Activated CD8-positive, alpha-beta T cell treated with anti-CD3 and anti-CD28 coated beads for 36 hours (primary cell): ENCODE measurements at regions of chr14 and their contacts with region 1.

Region 1: GRCh38 chr14:50726372-50727107 is 58.4 kb upstream of the SAV1 start:
- DNase-seq: peak; percentile 43
- ATAC-seq: peak; percentile 95
- H3K4me3 Mint-ChIP-seq: peak overlapping the region; percentile 37
- H3K27ac Mint-ChIP-seq: peak overlapping the region; percentile 93
- H3K4me1 Mint-ChIP-seq: peaks cover 32% of the 10 kb centered on the region
- H3K27me3 Mint-ChIP-seq: no peaks in the 10 kb centered on the region
- CTCF ChIP-seq: no peak

Region 2: DNA sequence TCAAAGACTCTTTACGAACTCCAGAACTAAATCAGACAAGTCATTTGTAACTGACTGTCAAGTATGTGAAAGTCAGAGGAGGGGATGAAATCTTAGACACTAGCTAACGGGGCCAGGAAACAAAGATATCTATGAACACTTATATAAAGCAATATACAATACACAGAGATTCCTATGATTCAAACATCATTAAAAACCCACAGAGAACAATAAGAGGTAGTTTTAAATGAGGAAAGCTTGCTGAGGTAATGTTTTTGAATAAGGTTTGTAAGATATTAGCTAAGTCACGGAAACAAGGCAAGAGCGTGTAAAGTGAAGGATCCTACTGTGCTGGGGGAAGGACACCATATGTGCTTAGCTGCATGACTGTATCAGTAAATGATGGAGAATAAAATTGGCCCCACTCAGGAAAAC is 95.1 kb before region 1 on chr14:
- CTCF ChIA-PET with region 1: no interaction called
- POLR2A ChIA-PET with region 1: no interaction called
- intact Hi-C with region 1: no loop called
- DNase-seq: no peak
- ATAC-seq: no peak
- H3K4me3 Mint-ChIP-seq: no peak overlapping the region
- H3K27ac Mint-ChIP-seq: no peak overlapping the region
- H3K4me1 Mint-ChIP-seq: no peaks in the 10 kb centered on the region
- H3K27me3 Mint-ChIP-seq: no peaks in the 10 kb centered on the region
- CTCF ChIP-seq: no peak

Region 3: DNA sequence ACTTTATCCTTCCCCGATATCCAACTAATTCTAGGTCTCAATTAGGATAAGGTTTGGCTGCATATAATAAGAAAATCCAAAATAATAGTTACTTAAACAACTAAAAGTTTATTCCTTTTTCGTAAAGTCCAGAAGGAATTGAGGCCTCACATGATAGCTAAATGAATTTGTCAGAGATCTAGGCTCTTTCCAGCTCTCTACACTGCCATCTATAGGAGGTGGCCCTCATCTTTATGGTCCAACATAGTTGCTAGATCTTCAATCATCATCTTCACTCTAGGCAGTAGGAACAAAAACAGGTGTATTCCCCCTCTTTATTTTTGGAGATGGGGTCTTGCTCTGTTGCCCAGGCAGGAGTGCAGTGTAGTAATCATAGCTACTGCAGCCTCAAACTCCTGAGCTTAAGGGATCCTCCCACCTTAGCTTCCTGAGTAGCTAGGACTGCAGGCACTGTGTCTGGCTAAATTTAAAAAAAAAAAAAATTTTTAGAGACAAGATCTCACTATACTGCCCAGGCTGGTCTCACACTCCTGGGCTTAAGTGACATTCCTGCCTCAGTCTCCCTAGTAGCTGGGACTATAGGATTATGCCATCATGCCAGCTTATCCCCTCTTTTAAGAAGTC is 12.0 kb before region 1 on chr14:
- CTCF ChIA-PET with region 1: interaction called, 28 read pairs
- POLR2A ChIA-PET with region 1: interaction called, 3 read pairs
- intact Hi-C with region 1: no loop called
- DNase-seq: peak; percentile 13
- ATAC-seq: peak; percentile 74
- H3K4me3 Mint-ChIP-seq: no peak overlapping the region
- H3K27ac Mint-ChIP-seq: no peak overlapping the region
- H3K4me1 Mint-ChIP-seq: no peaks in the 10 kb centered on the region
- H3K27me3 Mint-ChIP-seq: no peaks in the 10 kb centered on the region
- CTCF ChIP-seq: peak; percentile 42

Region 4: GRCh38 chr14:50736932-50737419 is 10.4 kb after region 1 on chr14:
- CTCF ChIA-PET with region 1: interaction called, 25 read pairs
- POLR2A ChIA-PET with region 1: interaction called, 19 read pairs
- intact Hi-C with region 1: no loop called
- DNase-seq: peak; percentile 80
- ATAC-seq: peak; percentile 94
- H3K4me3 Mint-ChIP-seq: no peak overlapping the region
- H3K27ac Mint-ChIP-seq: peak overlapping the region; percentile 89
- H3K4me1 Mint-ChIP-seq: peaks cover 46% of the 10 kb centered on the region
- H3K27me3 Mint-ChIP-seq: no peaks in the 10 kb centered on the region
- CTCF ChIP-seq: no peak